K562 (cell line): ENCODE measurements at regions of chr18 and their contacts with region 1.

Region 1: GRCh38 chr18:3481696-3482210 is 31.8 kb downstream of the TGIF1 start:
- DNase-seq: peak; percentile 59 to 76 (median 70)
- ATAC-seq: peak; percentile 97
- H3K4me3 ChIP-seq: no peak overlapping the region
- H3K27ac ChIP-seq: no peak overlapping the region
- H3K4me1 ChIP-seq: peaks cover 0 to 11% of the 10 kb centered on the region in 2 experiments; a peak in 4 of 5 replicates
- H3K27me3 ChIP-seq: no peaks in the 10 kb centered on the region
- CTCF ChIP-seq: peak; percentile 70 to 87 (median 84)
- EP300 ChIP-seq: no peak
- POLR2A ChIP-seq: no peak
- RAD21 ChIP-seq: peak; percentile 47 to 69

Region 2: GRCh38 chr18:3297025-3297984 is 184.4 kb before region 1 on chr18:
- CTCF ChIA-PET with region 1: no interaction called
- POLR2A ChIA-PET with region 1: no interaction called
- in situ Hi-C with region 1: no loop called
- intact Hi-C with region 1: no loop called
- DNase-seq: peak; percentile 71 to 93 (median 74)
- ATAC-seq: peak; percentile 95
- H3K4me3 ChIP-seq: peak overlapping the region; percentile 57
- H3K27ac ChIP-seq: peak overlapping the region; percentile 54
- H3K4me1 ChIP-seq: peaks cover 8 to 21% of the 10 kb centered on the region in 2 experiments; a peak in 4 of 5 replicates
- H3K27me3 ChIP-seq: no peaks in the 10 kb centered on the region
- CTCF ChIP-seq: peak; percentile 83 to 97 (median 87)
- EP300 ChIP-seq: peak; percentile 50
- POLR2A ChIP-seq: peak; percentile 88
- RAD21 ChIP-seq: peak in 1 of 2 experiments; percentile 25; a peak in 2 of 4 replicates

Region 3: GRCh38 chr18:3454365-3455089 is 27.2 kb before region 1 on chr18:
- CTCF ChIA-PET with region 1: no interaction called
- POLR2A ChIA-PET with region 1: interaction called, 13 read pairs
- in situ Hi-C with region 1: no loop called
- intact Hi-C with region 1: no loop called
- DNase-seq: peak; percentile 58 to 84 (median 68)
- ATAC-seq: peak; percentile 10
- H3K4me3 ChIP-seq: peak overlapping the region; percentile 87
- H3K27ac ChIP-seq: peak overlapping the region; percentile 86; the same call in 2 of the 3 replicates
- H3K4me1 ChIP-seq: peaks cover 2 to 25% of the 10 kb centered on the region in 2 experiments
- H3K27me3 ChIP-seq: no peaks in the 10 kb centered on the region
- CTCF ChIP-seq: peak; percentile 73 to 93 (median 77); a peak in 5 of 6 replicates
- EP300 ChIP-seq: no peak
- POLR2A ChIP-seq: no peak
- RAD21 ChIP-seq: peak; percentile 80 to 85

Region 4: GRCh38 chr18:3525870-3526420 is 44.2 kb after region 1 on chr18:
- CTCF ChIA-PET with region 1: no interaction called
- POLR2A ChIA-PET with region 1: interaction called, 3 read pairs
- in situ Hi-C with region 1: no loop called
- intact Hi-C with region 1: loop called (anchors 2 kb)
- DNase-seq: peak; percentile 43 to 67 (median 50)
- ATAC-seq: peak; percentile 76
- H3K4me3 ChIP-seq: no peak overlapping the region
- H3K27ac ChIP-seq: peak overlapping the region; percentile 43
- H3K4me1 ChIP-seq: peaks cover 19 to 31% of the 10 kb centered on the region in 2 experiments; a peak in 3 of 5 replicates
- H3K27me3 ChIP-seq: no peaks in the 10 kb centered on the region
- CTCF ChIP-seq: no peak
- EP300 ChIP-seq: no peak
- POLR2A ChIP-seq: no peak
- RAD21 ChIP-seq: peak in 1 of 2 experiments; percentile 28; a peak in 1 of 4 replicates

Region 5: DNA sequence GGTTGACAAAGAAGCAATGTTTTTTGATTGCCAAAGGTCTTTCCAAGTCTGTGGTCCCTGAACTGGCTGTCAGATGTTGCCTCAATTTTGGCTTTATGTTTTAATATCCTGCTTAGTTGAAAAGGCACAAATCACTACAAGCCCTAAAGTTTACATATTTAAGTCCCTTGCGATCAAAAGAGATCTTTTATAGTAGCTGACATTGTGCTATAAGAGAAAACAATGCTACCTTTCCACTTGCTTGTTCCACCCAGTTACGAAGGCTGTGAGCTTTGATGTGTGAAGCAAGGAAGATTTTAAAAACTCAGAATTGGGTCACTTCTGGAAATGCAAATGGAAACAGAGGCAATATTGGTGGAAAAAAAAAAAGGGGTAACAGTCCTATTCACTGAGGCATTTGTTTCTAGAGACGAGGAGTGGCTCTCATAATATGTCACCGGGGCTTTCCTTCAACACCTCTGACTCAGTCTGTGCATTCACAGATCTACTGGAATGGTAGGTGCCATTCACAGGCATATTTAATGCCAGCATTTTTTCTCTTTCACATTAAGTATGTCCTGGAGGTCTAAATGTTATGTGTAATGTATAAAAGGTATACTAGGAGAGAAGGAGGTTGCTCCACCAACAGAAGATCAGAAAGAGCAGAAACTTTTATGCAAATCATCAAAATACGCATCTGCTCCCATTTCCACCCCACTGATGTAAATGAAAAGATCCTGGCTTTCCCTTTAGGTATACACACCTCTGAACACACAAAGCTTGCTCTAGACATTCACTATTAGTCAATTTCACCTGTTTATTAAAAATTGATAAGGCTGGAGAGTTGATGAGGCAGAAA is 60.0 kb after region 1 on chr18:
- CTCF ChIA-PET with region 1: no interaction called
- POLR2A ChIA-PET with region 1: no interaction called
- in situ Hi-C with region 1: no loop called
- intact Hi-C with region 1: no loop called
- DNase-seq: no peak
- ATAC-seq: peak; percentile 49
- H3K4me3 ChIP-seq: no peak overlapping the region
- H3K27ac ChIP-seq: no peak overlapping the region
- H3K4me1 ChIP-seq: peaks cover 3 to 14% of the 10 kb centered on the region in 2 experiments; a peak in 2 of 5 replicates
- H3K27me3 ChIP-seq: no peaks in the 10 kb centered on the region
- CTCF ChIP-seq: no peak
- EP300 ChIP-seq: no peak
- POLR2A ChIP-seq: no peak
- RAD21 ChIP-seq: no peak

Region 6: DNA sequence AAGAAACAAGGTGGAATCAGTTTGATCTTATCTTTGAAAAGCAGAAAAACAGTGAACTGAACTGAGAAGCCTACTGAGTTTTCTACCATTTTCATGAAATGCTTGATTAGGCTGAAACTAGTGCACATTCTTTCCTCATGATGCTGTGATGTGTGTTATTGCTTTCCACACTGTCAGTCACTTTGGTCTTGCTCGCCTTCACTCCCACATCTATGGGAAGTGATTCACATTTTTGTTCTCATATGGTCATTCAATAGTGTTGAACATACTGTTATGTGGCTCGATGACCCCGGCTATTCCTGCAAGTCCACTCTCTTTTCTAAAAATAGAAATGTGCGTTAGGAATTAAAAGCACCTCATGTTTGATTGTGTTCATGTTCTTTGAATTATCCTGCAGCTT is 97.9 kb after region 1 on chr18:
- CTCF ChIA-PET with region 1: no interaction called
- POLR2A ChIA-PET with region 1: no interaction called
- in situ Hi-C with region 1: loop called (anchors 5 kb)
- intact Hi-C with region 1: no loop called
- DNase-seq: no peak
- ATAC-seq: no peak
- H3K4me3 ChIP-seq: no peak overlapping the region
- H3K27ac ChIP-seq: no peak overlapping the region
- H3K4me1 ChIP-seq: peaks cover 17 to 18% of the 10 kb centered on the region in 2 experiments
- H3K27me3 ChIP-seq: no peaks in the 10 kb centered on the region
- CTCF ChIP-seq: no peak
- EP300 ChIP-seq: no peak
- POLR2A ChIP-seq: no peak
- RAD21 ChIP-seq: no peak

Region 7: GRCh38 chr18:3585656-3586509 is 104.1 kb after region 1 on chr18:
- CTCF ChIA-PET with region 1: no interaction called
- POLR2A ChIA-PET with region 1: no interaction called
- in situ Hi-C with region 1: no loop called
- intact Hi-C with region 1: loop called (anchors 1 kb)
- DNase-seq: peak; percentile 90 to 98 (median 93)
- ATAC-seq: peak; percentile 96
- H3K4me3 ChIP-seq: no peak overlapping the region
- H3K27ac ChIP-seq: peak overlapping the region; percentile 64
- H3K4me1 ChIP-seq: peaks cover 25 to 32% of the 10 kb centered on the region in 2 experiments
- H3K27me3 ChIP-seq: no peaks in the 10 kb centered on the region
- CTCF ChIP-seq: peak; percentile 94 to 98 (median 98)
- EP300 ChIP-seq: peak; percentile 77
- POLR2A ChIP-seq: no peak
- RAD21 ChIP-seq: peak; percentile 96 to 97

Region 8: GRCh38 chr18:4587204-4587603 is 1105.5 kb after region 1 on chr18:
- CTCF ChIA-PET with region 1: no interaction called
- POLR2A ChIA-PET with region 1: no interaction called
- in situ Hi-C with region 1: no loop called
- intact Hi-C with region 1: no loop called
- DNase-seq: no peak
- ATAC-seq: no peak
- H3K4me3 ChIP-seq: no peak overlapping the region
- H3K27ac ChIP-seq: no peak overlapping the region
- H3K4me1 ChIP-seq: no peaks in the 10 kb centered on the region
- H3K27me3 ChIP-seq: no peaks in the 10 kb centered on the region
- CTCF ChIP-seq: no peak
- EP300 ChIP-seq: no peak
- POLR2A ChIP-seq: no peak
- RAD21 ChIP-seq: no peak